Dendritic cell treated with granulocyte-macrophage colony-stimulating factor and Interleukin-4, amounts not matched to agents 40 ng/mL and 50 ng/mL, for 4 days (primary cell): ENCODE measurements at regions of chr18 and their contacts with region 1.

Region 1: DNA sequence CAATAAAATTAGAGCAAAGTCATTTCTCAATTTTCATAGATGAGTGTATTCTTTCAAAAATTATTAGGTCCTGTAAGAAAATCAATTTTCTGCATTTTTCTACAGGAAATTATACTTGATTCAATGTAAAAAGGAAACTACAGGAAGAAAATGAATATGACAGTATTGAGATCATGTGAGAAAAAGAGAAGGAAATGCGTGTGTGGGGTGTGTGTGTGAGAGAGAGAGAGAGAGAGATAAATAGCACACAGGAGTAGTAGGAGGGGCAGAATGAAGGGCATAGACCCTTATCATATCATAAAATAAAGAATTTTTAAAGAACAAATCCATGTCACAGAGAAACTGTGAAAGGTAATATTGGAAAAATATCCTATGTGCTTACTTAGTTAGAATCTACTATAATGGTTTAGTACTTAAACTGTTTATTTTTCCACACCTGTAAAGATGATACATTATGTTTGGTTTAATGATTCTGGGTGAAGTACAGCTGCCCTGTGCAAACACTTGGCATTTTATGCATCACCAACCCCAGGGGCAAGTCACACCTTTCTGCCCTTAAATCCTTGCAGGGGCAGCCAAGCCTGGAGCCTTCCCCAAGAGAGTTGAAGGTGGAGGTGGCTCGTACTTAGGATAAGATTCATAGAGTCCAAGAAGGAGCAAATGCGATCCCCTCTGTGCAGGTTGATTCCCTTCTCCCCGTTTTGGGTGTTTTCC is 276.4 kb downstream of the TGIF1 start:
- H3K4me3 Mint-ChIP-seq: no peak overlapping the region
- H3K27ac Mint-ChIP-seq: peak overlapping the region; percentile 79
- H3K4me1 Mint-ChIP-seq: peaks cover 58% of the 10 kb centered on the region
- H3K27me3 Mint-ChIP-seq: peaks cover 1% of the 10 kb centered on the region

Region 2: DNA sequence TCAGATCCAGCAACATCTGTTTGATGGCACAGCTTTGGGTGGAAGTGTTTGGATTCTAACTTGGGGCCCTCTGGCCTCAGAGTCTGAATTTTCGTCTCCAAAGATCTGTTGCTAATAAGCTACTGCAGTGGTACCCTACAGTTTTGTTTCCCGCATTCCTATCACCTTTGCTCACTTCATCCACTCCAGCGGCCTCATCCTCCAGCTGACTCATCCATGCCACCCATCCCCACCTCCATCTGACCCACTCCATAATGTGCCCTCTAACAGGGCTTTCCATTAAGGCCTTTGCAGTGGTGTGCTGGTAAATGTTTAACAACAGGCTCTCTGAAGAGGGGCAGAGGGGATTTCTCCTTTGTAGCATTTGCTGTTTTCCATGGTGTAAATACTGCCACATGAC is 50.9 kb before region 1 on chr18:
- intact Hi-C with region 1: no loop called
- H3K4me3 Mint-ChIP-seq: no peak overlapping the region
- H3K27ac Mint-ChIP-seq: no peak overlapping the region
- H3K4me1 Mint-ChIP-seq: peaks cover 39% of the 10 kb centered on the region
- H3K27me3 Mint-ChIP-seq: peaks cover 3% of the 10 kb centered on the region

Region 3: GRCh38 chr18:3747176-3747973 is 21.0 kb after region 1 on chr18:
- intact Hi-C with region 1: loop called (anchors 2 kb)
- H3K4me3 Mint-ChIP-seq: no peak overlapping the region
- H3K27ac Mint-ChIP-seq: peak overlapping the region; percentile 76
- H3K4me1 Mint-ChIP-seq: peaks cover 48% of the 10 kb centered on the region
- H3K27me3 Mint-ChIP-seq: no peaks in the 10 kb centered on the region